ENCODE measurements at regions of chr9 and their contacts with region 1.

Region 1: GRCh38 chr9:129333953-129334724 is 156.1 kb upstream of the IER5L start:
- DNase-seq: peak; percentile 88 to 89
- ATAC-seq: peak; percentile 87 to 95 (median 91)
- H3K4me3 ChIP-seq: peak overlapping the region in 8 of 10 donors; percentile 2 to 39 (median 29)
- H3K27ac ChIP-seq: peak overlapping the region; percentile 69 to 96 (median 88)
- H3K4me1 ChIP-seq: peaks cover 19 to 60% (median 53%) of the 10 kb centered on the region in 9 donors
- H3K27me3 ChIP-seq: no peaks in the 10 kb centered on the region
- CTCF ChIP-seq: peak in 4 of 9 donors; percentile 7 to 22 (median 11)

Region 2: DNA sequence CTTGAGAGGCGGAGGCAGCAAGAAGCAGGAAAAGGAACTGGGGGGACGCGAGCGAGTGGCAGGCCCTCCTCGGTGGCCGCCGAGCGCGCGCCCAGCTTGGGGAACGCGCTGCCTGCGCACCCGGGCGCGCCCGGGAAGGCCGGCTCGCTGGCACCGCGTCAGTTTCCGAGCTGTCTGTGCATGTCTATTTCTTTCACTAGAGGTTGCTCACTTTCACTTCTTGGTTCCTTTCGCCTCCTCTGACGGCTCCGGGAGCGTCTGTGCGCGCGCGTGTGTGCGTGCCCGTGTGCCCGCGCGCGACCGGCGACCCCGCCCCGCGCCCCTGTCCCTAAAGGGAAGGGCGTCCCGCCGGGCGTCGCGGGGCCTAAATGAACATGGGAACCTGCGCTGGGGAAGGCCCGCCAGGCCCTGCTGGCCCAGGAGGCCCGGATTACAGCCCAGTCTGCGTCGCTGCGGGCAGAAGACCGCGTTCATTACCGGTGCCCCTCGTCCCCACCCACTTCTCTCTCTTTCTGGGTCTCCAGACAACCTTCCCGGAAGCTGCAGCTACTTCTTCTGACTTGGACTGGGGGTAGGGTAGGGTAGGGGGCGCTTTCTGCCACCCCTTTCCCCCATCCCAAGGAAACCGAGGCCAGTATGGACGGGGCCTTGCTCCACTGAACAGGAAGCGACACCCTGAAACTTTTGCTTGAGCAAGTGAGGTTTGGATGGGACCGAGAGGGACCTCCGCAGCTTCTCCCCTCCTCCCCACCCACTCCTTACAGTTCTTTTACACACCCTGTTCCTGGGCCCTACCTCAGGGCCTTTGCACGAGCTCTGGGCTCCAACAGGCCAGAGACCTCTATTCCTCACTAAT is 49.6 kb after region 1 on chr9:
- intact Hi-C with region 1: loop called in 1 of 10 experiments (anchors 5 kb)
- DNase-seq: peak; percentile 87 to 88
- ATAC-seq: peak; percentile 87 to 94 (median 89)
- H3K4me3 ChIP-seq: peak overlapping the region; percentile 16 to 75 (median 60)
- H3K27ac ChIP-seq: peak overlapping the region; percentile 90 to 99 (median 96)
- H3K4me1 ChIP-seq: peaks cover 6 to 22% (median 17%) of the 10 kb centered on the region in 9 donors
- H3K27me3 ChIP-seq: no peaks in the 10 kb centered on the region
- CTCF ChIP-seq: peak in 6 of 9 donors; percentile 12 to 55 (median 36)

Region 3: DNA sequence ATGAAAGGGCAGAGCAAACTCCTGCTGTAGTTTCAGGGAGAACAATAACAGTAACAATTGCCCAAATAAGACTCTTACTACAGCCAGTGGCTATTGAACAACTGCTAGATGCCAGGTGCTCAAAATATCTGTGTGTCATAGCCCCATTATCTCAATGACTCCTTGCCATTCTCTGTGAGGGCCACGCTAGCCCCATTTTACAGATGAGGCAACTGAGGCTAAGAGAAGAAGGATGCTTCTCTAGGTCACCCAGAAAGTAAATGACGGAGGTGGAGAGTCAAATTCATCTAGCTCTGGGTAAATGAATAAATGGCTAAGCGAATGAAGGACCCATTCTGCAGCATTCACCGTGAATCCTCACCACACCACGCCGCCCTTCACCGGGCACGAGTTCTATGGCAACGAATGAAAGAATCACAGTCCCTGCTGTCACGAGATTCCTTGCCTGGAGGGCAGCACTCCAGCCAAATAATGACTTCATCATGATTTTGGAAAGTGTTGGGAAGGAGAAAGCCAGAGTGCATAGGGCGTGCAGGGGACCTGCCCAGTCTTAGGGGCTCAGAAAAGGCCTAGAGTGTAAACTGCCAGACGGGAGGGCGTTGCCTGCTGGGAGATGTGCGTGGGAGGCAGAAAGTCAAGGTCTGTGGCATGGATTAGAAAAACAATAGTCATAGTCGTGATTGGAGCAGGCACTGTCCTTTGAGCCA is 139.5 kb after region 1 on chr9:
- intact Hi-C with region 1: loop called in 1 of 10 experiments (anchors 10 kb)
- DNase-seq: peak; percentile 29 to 37
- ATAC-seq: peak; percentile 39 to 77 (median 62)
- H3K4me3 ChIP-seq: no peak overlapping the region
- H3K27ac ChIP-seq: peak overlapping the region in 3 of 10 donors; percentile 12 to 34 (median 20)
- H3K4me1 ChIP-seq: peaks cover 5 to 32% (median 12%) of the 10 kb centered on the region in 9 donors
- H3K27me3 ChIP-seq: no peaks in the 10 kb centered on the region
- CTCF ChIP-seq: no peak